Lower leg skin (tissue), 4 donors: ENCODE measurements at regions of chr6 and their contacts with region 1.

Region 1: GRCh38 chr6:77383026-77383425 is 80.3 kb downstream of the HTR1B start:
- DNase-seq: no peak
- H3K4me3 ChIP-seq: no peak overlapping the region
- CTCF ChIP-seq: no peak
- POLR2A ChIP-seq: no peak

Region 2: DNA sequence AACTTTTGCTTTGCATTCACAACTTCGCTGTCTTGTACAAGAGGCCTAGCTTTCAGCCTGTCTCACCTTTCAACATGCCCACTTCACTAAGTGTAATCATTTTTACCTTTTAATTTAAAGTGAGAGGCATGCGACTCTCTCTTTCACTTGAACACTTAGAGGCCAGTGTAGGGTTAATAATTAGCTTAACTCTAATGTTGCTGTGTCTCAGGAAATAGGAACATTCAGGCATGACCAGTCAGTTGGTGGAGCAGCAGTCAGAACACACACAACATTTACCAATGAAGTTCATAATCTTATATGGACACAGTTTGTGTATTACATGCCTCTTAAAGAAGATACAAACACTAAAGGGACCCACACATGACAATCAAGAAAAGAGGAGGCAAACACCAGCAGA is 32.7 kb after region 1 on chr6:
- intact Hi-C with region 1: loop called (anchors 1 kb)
- DNase-seq: no peak
- H3K4me3 ChIP-seq: no peak overlapping the region
- CTCF ChIP-seq: no peak
- POLR2A ChIP-seq: no peak